ENCODE measurements at regions of chr12 and their contacts with region 1.

Region 1: DNA sequence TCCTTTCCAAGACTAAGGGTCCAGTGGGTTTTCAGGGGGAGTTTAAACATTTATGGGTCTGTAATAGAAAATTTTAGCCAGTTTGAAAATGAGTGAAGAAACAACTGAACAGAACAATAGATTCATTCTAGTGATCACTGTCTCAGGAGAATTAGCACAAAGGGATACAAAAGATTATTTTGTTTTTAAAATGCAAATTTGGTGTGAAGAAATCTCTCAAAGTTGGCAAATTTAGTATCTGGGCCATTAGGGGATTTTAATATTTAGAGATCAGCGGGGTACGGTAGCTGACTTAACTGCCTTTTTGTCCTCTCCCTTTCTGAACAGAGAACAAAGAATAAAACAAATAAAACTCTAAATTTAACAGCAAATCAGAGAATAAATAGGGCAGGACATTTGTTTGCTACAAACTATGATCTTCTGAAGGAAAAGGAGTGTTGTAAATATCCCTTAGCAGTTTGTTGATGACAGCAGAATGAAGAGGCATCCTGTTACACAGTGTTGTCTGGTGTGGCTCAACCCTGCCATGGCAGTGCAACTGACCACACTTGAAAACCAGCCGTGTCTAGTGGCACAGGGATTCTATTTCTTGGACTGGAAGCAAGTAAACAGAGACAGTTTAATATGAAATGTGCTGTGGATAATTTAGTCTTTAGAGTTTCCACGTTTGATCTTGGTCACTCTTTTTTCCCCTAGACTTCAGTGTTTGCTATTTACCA is 46.3 kb upstream of the LRTM2 start:
- DNase-seq: no peak
- ATAC-seq: no peak
- H3K4me3 ChIP-seq: no peak overlapping the region
- H3K27ac ChIP-seq: no peak overlapping the region
- H3K4me1 ChIP-seq: peaks cover 12% of the 10 kb centered on the region
- H3K27me3 ChIP-seq: no peaks in the 10 kb centered on the region
- CTCF ChIP-seq: no peak

Region 2: GRCh38 chr12:1719139-1719538 is 55.0 kb before region 1 on chr12:
- CTCF ChIA-PET with region 1: no interaction called
- POLR2A ChIA-PET with region 1: interaction called, 12 read pairs
- in situ Hi-C with region 1: no loop called
- intact Hi-C with region 1: no loop called
- DNase-seq: no peak
- ATAC-seq: no peak
- H3K4me3 ChIP-seq: no peak overlapping the region
- H3K27ac ChIP-seq: no peak overlapping the region
- H3K4me1 ChIP-seq: no peaks in the 10 kb centered on the region; the same call in 1 of the 2 replicates
- H3K27me3 ChIP-seq: no peaks in the 10 kb centered on the region
- CTCF ChIP-seq: no peak

Region 3: DNA sequence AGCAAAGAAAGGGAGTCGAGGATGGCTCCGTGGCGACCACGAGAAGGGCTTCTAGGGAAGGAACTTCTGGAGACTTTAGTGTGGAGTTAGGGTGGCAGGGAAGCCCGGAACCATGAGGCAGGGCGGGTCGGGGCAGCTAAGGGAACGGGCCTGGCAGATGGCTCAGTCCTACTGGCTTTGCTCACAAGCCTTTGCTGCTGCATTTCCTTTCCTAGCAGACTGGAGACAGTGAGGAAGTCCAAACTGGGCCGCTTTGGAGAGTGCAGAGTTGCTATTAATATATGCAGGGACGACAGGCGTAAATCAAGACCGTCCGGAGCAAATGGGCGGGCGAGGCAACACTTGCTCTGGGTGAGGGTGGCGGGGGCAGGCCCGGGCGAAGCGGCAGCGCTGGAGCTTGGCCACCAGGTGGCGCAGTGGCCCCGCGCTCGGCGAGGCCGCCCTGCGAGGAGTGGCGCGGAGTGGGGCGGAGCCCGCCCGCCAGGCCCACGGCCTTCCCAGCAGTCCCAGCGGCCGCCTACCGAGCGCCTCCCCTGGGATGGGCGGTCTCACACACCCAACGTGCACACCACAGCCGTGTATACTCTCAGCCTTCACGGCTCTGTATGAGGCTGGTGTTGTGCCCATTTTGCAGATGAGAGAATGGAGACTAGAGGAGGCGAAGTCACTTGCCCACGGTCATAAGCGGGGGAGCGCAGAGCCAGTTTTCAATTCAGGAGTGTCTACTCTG is 21.9 kb after region 1 on chr12:
- CTCF ChIA-PET with region 1: no interaction called
- POLR2A ChIA-PET with region 1: no interaction called
- in situ Hi-C with region 1: no loop called
- intact Hi-C with region 1: no loop called
- DNase-seq: peak; percentile 41
- ATAC-seq: peak; percentile 95
- H3K4me3 ChIP-seq: peak overlapping the region; percentile 48 to 73
- H3K27ac ChIP-seq: peak overlapping the region; percentile 71
- H3K4me1 ChIP-seq: no peaks in the 10 kb centered on the region
- H3K27me3 ChIP-seq: no peaks in the 10 kb centered on the region
- CTCF ChIP-seq: peak; percentile 93

Measured in Panc1 (cell line).